ENCODE measurements at regions of chr7 and their contacts with region 1.

Region 1: GRCh38 chr7:786472-787255 is 45.6 kb upstream of the SUN1 start:
- DNase-seq: peak; percentile 80 to 86
- H3K4me3 ChIP-seq: no peak overlapping the region
- H3K27ac ChIP-seq: peak overlapping the region in 2 of 5 donors; percentile 30 to 50
- H3K4me1 ChIP-seq: peaks cover 0 to 18% (median 5%) of the 10 kb centered on the region in 4 donors
- H3K27me3 ChIP-seq: no peaks in the 10 kb centered on the region
- CTCF ChIP-seq: peak in 5 of 7 experiments; percentile 85 to 95 (median 89)
- EP300 ChIP-seq: no peak
- POLR2A ChIP-seq: no peak

Region 2: DNA sequence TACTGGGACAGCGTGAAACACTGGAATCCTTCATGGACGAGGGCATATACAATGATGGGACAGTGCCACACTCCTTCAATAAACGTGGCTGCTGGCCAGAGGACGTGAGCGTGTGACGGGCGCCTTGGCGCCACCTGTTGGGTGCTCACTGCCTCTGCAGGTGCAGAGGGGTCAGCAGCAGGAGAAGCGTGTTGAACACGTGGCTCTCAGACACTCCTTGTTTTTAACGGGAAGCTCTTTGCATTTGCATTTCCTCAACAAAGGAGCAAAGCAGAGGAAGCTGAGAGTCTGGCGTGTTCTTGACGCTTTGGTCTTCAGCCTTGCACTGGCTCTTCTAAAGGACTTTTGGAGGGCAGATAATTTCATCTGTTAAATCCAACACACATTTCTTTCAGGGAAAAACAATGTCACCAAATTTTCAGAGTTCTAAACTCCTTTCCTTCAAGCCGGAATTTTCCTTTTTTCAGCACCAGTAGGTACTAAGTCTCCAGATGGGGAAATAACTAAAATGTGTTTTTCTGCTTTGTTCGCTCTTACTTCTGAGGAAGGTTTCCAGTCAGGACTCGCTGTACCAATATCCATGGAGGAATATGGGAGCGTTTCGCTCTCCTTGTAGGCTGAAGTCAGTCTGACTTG is 86.8 kb after region 1 on chr7:
- intact Hi-C with region 1: loop called (anchors 5 kb)
- DNase-seq: peak; percentile 92 to 94
- H3K4me3 ChIP-seq: no peak overlapping the region
- H3K27ac ChIP-seq: peak overlapping the region; percentile 59 to 95 (median 74)
- H3K4me1 ChIP-seq: peaks cover 32 to 71% (median 52%) of the 10 kb centered on the region in 4 donors
- H3K27me3 ChIP-seq: no peaks in the 10 kb centered on the region
- CTCF ChIP-seq: peak in 6 of 7 experiments; percentile 25 to 99 (median 92)
- EP300 ChIP-seq: no peak
- POLR2A ChIP-seq: no peak

Measured in stomach (tissue), 19 donors.